ENCODE measurements at regions of chr22 and their contacts with region 1.

Region 1: DNA sequence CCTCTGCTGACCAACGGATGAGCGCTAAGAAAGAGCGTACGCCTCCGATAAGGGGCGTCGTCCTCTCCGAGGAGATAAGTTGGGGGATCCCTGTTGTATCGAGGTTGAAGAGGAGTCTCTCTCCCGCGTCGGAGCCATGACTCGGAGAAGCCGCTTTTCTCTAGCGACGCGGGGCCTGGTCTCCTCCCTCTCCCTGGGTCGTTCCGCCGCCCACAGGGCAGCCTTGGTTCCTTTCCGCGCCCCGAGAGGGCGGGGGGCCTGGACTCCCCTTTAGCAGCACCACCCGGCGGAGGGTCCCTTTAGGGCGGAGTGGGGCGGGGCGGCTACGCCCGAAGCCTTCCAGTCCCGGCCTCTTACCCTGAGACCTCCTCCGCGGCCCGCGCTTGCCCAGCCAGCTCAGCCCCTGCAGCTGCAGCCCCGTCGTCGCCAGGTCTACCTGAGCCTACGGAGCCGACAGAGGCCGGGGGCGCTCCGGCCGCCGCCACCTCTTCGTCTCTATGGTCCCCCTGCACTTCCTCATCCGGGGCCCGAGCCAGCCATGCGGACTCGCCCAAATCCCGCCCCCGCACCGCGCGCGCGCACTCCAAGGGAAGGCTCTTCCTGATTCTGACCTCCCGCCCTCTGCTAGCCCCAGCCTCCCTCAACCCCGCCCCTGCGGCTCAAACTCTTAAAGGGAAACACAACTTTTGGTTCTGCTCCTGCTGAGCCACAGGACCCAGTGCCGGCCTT is at the start of gene PRR14L:
- DNase-seq: peak; percentile 98 to 99
- ATAC-seq: peak; percentile 87 to 94 (median 90)
- H3K4me3 ChIP-seq: peak within 1 kb of the TSS; percentile 94
- H3K27ac ChIP-seq: peak within 1 kb of the TSS; percentile 84
- H3K4me1 ChIP-seq: peaks cover 41% of the 10 kb centered on the region
- H3K27me3 ChIP-seq: no peaks in the 10 kb centered on the region
- CTCF ChIP-seq: no peak
- total RNA-seq, gene PRR14L: 8.8 to 16.4 (median 12.6) TPM

Region 2: GRCh38 chr22:31661851-31662656 is 87.7 kb before region 1 on chr22 and contains the start of gene PISD:
- intact Hi-C with region 1: loop called (anchors 5 kb)
- DNase-seq: peak; percentile 95 to 97
- ATAC-seq: peak; percentile 98 to 100 (median 99)
- H3K4me3 ChIP-seq: peak within 1 kb of the TSS; percentile 99
- H3K27ac ChIP-seq: peak within 1 kb of the TSS; percentile 83
- H3K4me1 ChIP-seq: peaks cover 14% of the 10 kb centered on the region
- H3K27me3 ChIP-seq: no peaks in the 10 kb centered on the region
- CTCF ChIP-seq: no peak
- total RNA-seq, gene PISD: 11.1 to 24.2 (median 17.2) TPM

Region 3: DNA sequence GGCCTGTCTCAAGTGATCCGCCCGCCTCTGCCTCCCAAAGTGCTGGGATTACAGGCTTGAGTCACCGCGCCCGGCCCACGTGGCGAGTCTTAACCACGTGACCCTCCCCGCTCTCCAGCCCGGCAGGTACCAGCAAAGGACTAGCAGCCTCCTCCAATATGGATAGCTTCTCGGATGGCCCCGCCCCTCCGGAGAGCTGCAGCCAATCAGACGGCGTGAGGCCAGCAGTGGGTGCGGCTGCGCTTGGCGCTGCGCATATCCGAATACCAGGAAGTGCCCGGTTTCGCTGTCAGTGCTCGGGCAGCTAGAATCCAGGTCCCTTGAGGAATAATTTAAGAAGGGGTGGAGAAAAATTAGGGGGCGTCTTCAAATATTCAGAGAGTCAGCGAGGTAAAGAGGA is 73.1 kb before region 1 on chr22:
- intact Hi-C with region 1: no loop called
- DNase-seq: peak; percentile 95
- ATAC-seq: peak; percentile 97 to 99 (median 98)
- H3K4me3 ChIP-seq: peak overlapping the region; percentile 66
- H3K27ac ChIP-seq: peak overlapping the region; percentile 69
- H3K4me1 ChIP-seq: peaks cover 19% of the 10 kb centered on the region
- H3K27me3 ChIP-seq: no peaks in the 10 kb centered on the region
- CTCF ChIP-seq: no peak

Region 4: GRCh38 chr22:32411829-32412592 is 662.2 kb after region 1 on chr22 and contains the start of gene RTCB:
- intact Hi-C with region 1: loop called in 1 of 2 experiments (anchors 10 kb)
- DNase-seq: peak; percentile 94 to 97
- ATAC-seq: peak; percentile 87 to 98 (median 93)
- H3K4me3 ChIP-seq: peak within 1 kb of the TSS; percentile 84
- H3K27ac ChIP-seq: peak within 1 kb of the TSS; percentile 79
- H3K4me1 ChIP-seq: peaks cover 18% of the 10 kb centered on the region
- H3K27me3 ChIP-seq: no peaks in the 10 kb centered on the region
- CTCF ChIP-seq: no peak
- total RNA-seq, gene RTCB: 40.3 to 59.5 (median 47.5) TPM